Heart left ventricle (tissue), 16 donors: ENCODE measurements at regions of chr19 and their contacts with region 1.

Region 1: GRCh38 chr19:662962-663681 is at the start of gene RNF126:
- DNase-seq: peak; percentile 92 to 97 (median 94)
- ATAC-seq: peak; percentile 62 to 84 (median 80)
- H3K4me3 ChIP-seq: peak within 1 kb of the TSS; percentile 76 to 100 (median 96)
- H3K27ac ChIP-seq: peak within 1 kb of the TSS; percentile 43 to 97 (median 92)
- H3K4me1 ChIP-seq: peaks cover 22 to 67% (median 55%) of the 10 kb centered on the region in 12 donors
- H3K27me3 ChIP-seq: no peaks in the 10 kb centered on the region
- CTCF ChIP-seq: no peak
- POLR2A ChIP-seq: peak in 1 of 2 donors; percentile 24
- total RNA-seq, gene RNF126: 21.6 to 105 (median 29.4) TPM

Region 2: GRCh38 chr19:572140-572742 is 90.9 kb before region 1 on chr19 and contains the start of gene BSG:
- intact Hi-C with region 1: loop called in 1 of 10 experiments (anchors 2 kb)
- DNase-seq: peak; percentile 99
- ATAC-seq: peak; percentile 52 to 78 (median 74)
- H3K4me3 ChIP-seq: peak within 1 kb of the TSS; percentile 71 to 100 (median 98)
- H3K27ac ChIP-seq: peak within 1 kb of the TSS; percentile 85 to 99 (median 96)
- H3K4me1 ChIP-seq: peaks cover 0 to 53% (median 42%) of the 10 kb centered on the region in 12 donors
- H3K27me3 ChIP-seq: no peaks in the 10 kb centered on the region
- CTCF ChIP-seq: no peak
- POLR2A ChIP-seq: peak; percentile 96 to 99
- total RNA-seq, gene BSG: 1,160 to 2,590 (median 1,462) TPM

Region 3: DNA sequence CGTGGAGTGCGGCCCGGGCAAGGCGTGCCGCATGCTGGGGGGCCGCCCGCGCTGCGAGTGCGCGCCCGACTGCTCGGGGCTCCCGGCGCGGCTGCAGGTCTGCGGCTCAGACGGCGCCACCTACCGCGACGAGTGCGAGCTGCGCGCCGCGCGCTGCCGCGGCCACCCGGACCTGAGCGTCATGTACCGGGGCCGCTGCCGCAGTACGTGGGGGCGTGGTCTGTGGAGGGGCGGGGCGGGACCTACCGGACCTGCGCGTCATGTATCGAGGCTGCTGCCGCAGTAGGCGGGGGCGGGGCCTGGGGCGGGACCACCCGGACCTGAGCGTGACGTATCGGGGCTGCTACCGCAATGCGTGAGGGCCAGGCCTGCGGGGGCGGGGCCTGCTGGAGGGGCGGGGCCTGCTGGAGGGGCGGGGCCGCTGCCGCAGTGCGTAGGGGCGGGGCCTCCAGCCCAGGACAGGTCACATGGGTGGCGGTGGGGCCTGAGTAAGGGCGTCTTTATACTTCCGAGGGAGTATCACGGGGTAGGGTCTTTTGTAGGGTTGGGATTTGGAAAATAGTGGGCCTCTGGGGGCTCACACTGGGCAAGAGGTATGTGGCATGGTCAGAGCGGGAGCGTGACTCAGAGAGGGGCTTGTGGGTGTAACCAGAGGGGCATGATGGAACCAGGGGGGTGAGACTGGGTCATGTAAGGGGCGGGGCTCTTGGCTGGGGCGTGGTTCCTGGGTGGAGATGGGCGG is 17.3 kb after region 1 on chr19:
- intact Hi-C with region 1: loop called in 1 of 10 experiments (anchors 1 kb)
- DNase-seq: peak; percentile 99 to 100 (median 100)
- ATAC-seq: peak; percentile 81 to 88 (median 84)
- H3K4me3 ChIP-seq: peak overlapping the region; percentile 51 to 96 (median 80)
- H3K27ac ChIP-seq: peak overlapping the region; percentile 83 to 99 (median 98)
- H3K4me1 ChIP-seq: peaks cover 4 to 52% (median 23%) of the 10 kb centered on the region in 12 donors
- H3K27me3 ChIP-seq: peaks cover 0 to 10% (median 0%) of the 10 kb centered on the region in 9 donors
- CTCF ChIP-seq: peak in 10 of 12 donors; percentile 13 to 69 (median 49)
- POLR2A ChIP-seq: peak in 1 of 2 donors; percentile 91

Region 4: DNA sequence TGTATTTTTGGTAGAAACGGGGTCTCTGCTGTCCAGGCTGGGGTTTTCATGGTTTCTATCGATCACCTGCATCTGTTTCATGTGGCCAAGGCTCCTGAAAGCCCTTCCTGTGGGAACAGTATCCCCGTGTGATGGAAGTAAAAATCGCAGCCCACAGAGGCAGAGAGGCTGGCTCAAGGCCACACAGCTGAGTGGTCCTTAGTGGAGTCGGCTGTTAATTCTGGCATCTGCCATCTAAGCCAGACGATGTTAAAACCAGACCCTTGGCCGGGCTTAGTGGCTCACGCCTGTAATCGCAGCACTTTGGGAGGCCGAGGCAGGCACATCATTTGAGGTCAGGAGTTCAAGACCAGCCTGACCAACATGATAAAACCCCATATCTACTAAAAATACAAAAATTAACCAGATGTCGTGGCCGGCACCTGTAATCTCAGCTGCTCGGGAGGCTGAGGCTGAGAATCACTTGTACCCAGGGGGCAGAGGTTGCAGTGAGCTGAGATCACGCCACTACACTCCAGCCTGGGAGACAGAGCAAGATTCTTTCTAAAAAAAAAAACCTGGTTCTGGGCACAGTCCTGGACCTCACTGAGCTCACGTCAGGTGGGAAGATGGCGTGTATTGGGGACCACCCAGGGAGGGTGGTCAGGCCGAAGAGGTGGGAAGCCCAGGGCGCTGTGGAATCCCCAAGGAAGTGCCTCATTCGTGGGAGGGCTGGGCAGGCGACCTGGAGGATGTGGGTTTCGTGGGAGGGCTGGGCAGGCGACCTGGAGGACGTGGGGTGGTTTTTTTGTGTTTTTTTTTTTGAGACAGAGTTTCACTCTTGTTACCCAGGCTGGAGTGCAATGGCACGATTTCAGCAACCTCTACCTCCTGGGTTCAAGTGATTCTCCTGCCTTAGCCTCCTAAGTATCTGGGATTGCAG is 69.3 kb after region 1 on chr19:
- intact Hi-C with region 1: loop called (anchors 1 to 2 kb)
- DNase-seq: no peak
- ATAC-seq: no peak
- H3K4me3 ChIP-seq: no peak overlapping the region
- H3K27ac ChIP-seq: no peak overlapping the region
- H3K4me1 ChIP-seq: peaks cover 0 to 26% (median 15%) of the 10 kb centered on the region in 12 donors
- H3K27me3 ChIP-seq: no peaks in the 10 kb centered on the region
- CTCF ChIP-seq: no peak
- POLR2A ChIP-seq: no peak

Region 5: GRCh38 chr19:913080-913748 is 250.1 kb after region 1 on chr19 and contains the start of gene R3HDM4:
- intact Hi-C with region 1: loop called in 1 of 10 experiments (anchors 5 kb)
- DNase-seq: peak; percentile 84 to 93 (median 87)
- ATAC-seq: peak; percentile 79 to 95 (median 90)
- H3K4me3 ChIP-seq: peak within 1 kb of the TSS; percentile 72 to 99 (median 88)
- H3K27ac ChIP-seq: peak within 1 kb of the TSS in 11 of 12 donors; percentile 80 to 97 (median 92)
- H3K4me1 ChIP-seq: peaks cover 7 to 56% (median 19%) of the 10 kb centered on the region in 12 donors
- H3K27me3 ChIP-seq: peaks cover 13 to 23% (median 18%) of the 10 kb centered on the region in 9 donors
- CTCF ChIP-seq: no peak
- POLR2A ChIP-seq: peak in 1 of 2 donors; percentile 51
- total RNA-seq, gene R3HDM4: 17.1 to 35.5 (median 23.8) TPM